Activated T-helper 2 cell treated with anti-CD3 and anti-CD28 coated beads, Interferon-gamma antibody, Interleukin-2, Interleukin-4, amounts not matched to agents 10 μg/mL and 5 μg/mL and 100 μg/mL, durations not matched to agents 14 hours and 24 hours and 36 hours (primary cell): ENCODE measurements at regions of chr22 and their contacts with region 1.

Region 1: GRCh38 chr22:21791635-21792625 is 56.3 kb upstream of the YPEL1 start:
- DNase-seq: peak; percentile 11
- H3K4me3 Mint-ChIP-seq: no peak overlapping the region
- H3K27ac Mint-ChIP-seq: peak overlapping the region; percentile 83
- H3K4me1 Mint-ChIP-seq: peaks cover 18% of the 10 kb centered on the region
- H3K27me3 Mint-ChIP-seq: no peaks in the 10 kb centered on the region

Region 2: DNA sequence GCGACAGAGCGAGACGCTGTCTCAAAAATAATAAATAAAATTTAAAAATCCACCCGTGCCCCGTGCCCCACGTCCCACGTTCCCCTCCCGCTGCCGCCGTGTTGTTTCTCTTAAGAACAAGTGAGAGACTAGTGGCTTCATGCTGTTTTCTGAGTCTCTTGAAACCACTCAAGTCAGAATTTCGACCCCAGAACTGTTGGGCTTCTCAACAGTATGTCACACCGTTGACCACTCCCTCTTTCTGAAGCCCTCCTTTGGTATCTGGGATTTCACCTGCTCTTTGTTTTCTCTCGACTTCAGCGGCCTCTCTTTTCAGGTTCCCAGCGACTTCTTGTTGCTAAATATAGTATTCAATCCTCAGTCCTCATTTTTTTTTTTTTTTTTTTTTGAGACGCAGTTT is 125.1 kb before region 1 on chr22:
- intact Hi-C with region 1: no loop called
- DNase-seq: no peak
- H3K4me3 Mint-ChIP-seq: peak overlapping the region; percentile 98
- H3K27ac Mint-ChIP-seq: peak overlapping the region; percentile 95
- H3K4me1 Mint-ChIP-seq: peaks cover 15% of the 10 kb centered on the region
- H3K27me3 Mint-ChIP-seq: no peaks in the 10 kb centered on the region

Region 3: GRCh38 chr22:21735200-21736076 is 56.5 kb before region 1 on chr22 and contains the start of gene YPEL1:
- intact Hi-C with region 1: loop called (anchors 10 kb)
- DNase-seq: peak; percentile 96
- H3K4me3 Mint-ChIP-seq: peak within 1 kb of the TSS; percentile 86
- H3K27ac Mint-ChIP-seq: peak within 1 kb of the TSS; percentile 84
- H3K4me1 Mint-ChIP-seq: peaks cover 18% of the 10 kb centered on the region
- H3K27me3 Mint-ChIP-seq: peaks cover 10% of the 10 kb centered on the region
- total RNA-seq, gene YPEL1: 1.5 and 1.9 TPM in 2 replicates

Region 4: DNA sequence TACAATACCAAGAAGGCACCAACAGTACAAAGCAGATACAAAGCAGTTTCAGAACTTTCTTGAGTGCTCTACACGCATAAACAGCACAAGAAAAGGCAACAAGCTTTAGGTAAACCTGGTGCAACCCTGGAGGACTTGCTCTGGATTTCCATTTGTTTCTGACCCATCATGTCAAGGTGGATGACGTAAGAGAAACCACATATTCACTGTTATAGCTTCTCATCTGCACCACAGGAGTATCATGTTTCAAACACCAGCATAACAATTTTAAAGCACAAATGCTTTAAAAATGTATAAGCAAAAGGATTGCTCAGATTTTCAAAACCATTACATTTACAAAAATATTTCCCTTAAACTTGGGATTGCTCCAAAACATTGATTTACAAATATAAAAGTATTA is 31.3 kb before region 1 on chr22:
- intact Hi-C with region 1: loop called (anchors 1 kb)
- DNase-seq: no peak
- H3K4me3 Mint-ChIP-seq: no peak overlapping the region
- H3K27ac Mint-ChIP-seq: no peak overlapping the region
- H3K4me1 Mint-ChIP-seq: peaks cover 53% of the 10 kb centered on the region
- H3K27me3 Mint-ChIP-seq: no peaks in the 10 kb centered on the region

Region 5: DNA sequence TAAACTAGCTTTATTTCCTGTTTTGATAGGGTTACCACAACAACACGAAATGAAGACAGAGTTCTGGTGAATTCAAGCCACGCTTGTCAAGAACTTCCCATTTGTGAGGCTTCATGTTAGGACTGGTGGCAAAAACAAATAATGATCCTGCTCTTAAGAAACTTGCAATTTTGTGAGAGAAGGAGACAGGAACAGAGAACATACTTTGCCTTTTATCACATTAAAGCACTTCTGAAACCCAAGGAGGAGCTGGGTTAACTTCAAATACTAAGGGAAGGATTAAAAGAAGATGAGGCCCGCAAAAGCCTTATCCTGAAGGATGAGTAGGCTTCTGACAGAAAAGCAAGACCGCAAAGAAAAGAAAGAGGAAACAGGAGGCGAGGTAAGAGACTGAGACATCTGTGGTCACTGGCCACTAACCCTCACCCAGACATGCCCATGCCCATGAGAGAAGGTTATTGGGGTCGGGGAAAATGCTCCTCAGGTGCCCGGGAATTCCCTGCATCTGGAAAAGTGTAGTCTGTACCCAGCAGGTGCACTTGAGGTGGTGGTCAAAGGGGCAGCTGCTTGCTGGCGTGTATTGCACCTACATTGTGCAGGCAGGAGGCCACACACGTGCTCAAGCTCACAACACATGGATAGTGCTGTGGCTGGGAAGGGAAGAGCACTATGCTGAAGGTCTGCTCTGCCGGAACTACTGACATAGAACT is 25.0 kb after region 1 on chr22:
- intact Hi-C with region 1: loop called (anchors 2 kb)
- DNase-seq: peak; percentile 24
- H3K4me3 Mint-ChIP-seq: peak overlapping the region; percentile 68
- H3K27ac Mint-ChIP-seq: peak overlapping the region; percentile 88
- H3K4me1 Mint-ChIP-seq: peaks cover 54% of the 10 kb centered on the region
- H3K27me3 Mint-ChIP-seq: no peaks in the 10 kb centered on the region